Left ventricle myocardium inferior (tissue), 1 donor: ENCODE measurements at regions of chr7 and their contacts with region 1.

Region 1: GRCh38 chr7:97835296-97836138 is 36.7 kb downstream of the ASNS start:
- DNase-seq: peak; percentile 26
- H3K4me3 ChIP-seq: no peak overlapping the region
- H3K27ac ChIP-seq: no peak overlapping the region
- H3K4me1 ChIP-seq: no peaks in the 10 kb centered on the region
- H3K27me3 ChIP-seq: peaks cover 67% of the 10 kb centered on the region
- CTCF ChIP-seq: peak; percentile 72

Region 2: DNA sequence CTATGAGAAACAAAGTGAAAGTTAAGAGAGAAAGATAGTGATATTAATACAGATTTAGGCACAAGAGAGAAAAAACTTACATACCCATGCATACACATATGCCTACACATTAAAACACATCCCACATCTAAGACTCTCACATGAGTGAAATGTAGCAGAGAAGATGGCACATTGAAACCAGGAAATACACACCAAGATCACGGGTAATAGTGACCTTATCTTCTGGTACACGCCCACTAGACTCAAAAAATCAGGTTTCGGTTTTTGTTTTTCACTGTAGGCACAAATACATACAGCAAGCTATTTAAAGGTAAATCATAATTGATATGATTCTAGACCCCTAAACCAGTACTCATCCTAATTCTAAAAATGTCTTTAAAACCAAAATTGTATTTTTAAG is 328.8 kb before region 1 on chr7:
- intact Hi-C with region 1: loop called (anchors 10 kb)
- DNase-seq: no peak
- H3K4me3 ChIP-seq: no peak overlapping the region
- H3K27ac ChIP-seq: no peak overlapping the region
- H3K4me1 ChIP-seq: no peaks in the 10 kb centered on the region
- H3K27me3 ChIP-seq: peaks cover 4% of the 10 kb centered on the region
- CTCF ChIP-seq: no peak

Region 3: DNA sequence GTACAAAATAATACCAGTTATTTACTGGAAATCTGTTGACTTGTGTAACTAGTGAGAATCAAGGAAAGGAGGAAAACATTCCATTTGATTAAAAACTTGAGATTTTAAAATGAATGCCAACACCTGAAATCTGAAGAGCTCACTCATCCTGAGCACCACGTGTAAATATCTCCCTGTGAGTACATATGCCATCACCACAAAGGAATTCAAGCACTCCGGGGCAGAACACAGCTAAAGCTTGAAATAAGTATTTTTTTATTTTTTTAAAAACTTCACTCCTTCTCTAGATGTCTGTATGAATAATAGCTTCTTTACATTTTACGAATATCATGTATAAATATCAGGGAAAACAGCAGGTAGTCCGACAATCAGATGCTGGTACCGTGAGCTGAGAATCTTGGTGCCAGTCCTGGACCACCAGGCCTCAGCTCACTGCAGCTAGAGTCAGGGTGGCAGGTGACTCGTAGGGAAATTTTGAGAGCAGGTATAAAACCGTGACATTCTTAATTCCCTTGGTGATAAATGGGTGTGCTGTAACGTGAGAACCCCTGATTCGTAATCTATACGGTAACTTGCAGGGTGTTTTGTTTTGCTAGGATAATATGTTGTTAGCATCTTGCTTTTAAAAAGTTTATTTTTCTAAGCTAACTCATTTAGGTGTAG is 283.9 kb after region 1 on chr7:
- intact Hi-C with region 1: no loop called
- DNase-seq: no peak
- H3K4me3 ChIP-seq: peak overlapping the region; percentile 22
- H3K27ac ChIP-seq: peak overlapping the region; percentile 73
- H3K4me1 ChIP-seq: peaks cover 65% of the 10 kb centered on the region
- H3K27me3 ChIP-seq: no peaks in the 10 kb centered on the region
- CTCF ChIP-seq: no peak